Right cardiac atrium (tissue), 5 donors: ENCODE measurements at regions of chr3 and their contacts with region 1.

Region 1: DNA sequence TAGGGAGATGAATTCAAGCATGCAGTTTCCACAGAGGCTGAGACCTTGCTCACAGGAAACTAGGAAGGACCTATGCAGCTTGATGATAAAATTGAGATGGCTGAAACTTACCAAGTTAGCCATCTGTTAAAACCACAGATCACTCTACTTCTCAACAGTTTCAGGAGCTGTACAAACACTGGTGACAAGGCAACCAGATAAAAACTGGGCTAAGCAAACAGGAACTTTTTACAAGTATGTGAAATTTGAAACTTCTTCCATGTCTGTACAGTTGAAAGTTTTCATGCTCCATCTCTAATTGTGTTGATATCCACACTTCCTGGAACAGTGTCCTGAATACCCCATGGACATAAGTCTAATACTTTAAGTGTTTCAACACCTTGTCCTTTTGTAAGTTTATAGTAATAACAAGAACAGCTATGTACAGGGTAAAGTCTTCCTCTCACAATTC is 78.2 kb downstream of the FAIM start:
- DNase-seq: no peak
- ATAC-seq: no peak
- H3K4me3 ChIP-seq: no peak overlapping the region
- H3K27ac ChIP-seq: no peak overlapping the region
- H3K4me1 ChIP-seq: peaks cover 3% of the 10 kb centered on the region
- H3K27me3 ChIP-seq: no peaks in the 10 kb centered on the region

Region 2: DNA sequence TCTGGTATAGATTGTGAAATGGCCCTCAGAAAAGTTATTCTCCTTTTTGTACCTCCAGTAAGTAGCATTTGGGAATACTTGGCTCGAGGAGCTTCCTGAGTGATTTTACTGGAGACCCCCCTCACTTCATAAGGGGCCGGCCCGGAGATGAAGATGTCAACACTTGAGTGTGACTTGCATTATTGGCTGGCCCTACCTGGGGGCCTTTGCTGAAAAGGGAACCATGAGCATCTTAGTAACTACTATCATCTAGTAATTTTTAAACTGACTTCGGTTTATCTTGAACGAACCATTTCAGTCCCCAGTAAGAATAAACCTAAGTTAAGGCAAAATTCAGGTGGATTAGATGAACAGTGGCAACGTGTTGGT is 76.9 kb before region 1 on chr3:
- intact Hi-C with region 1: loop called in 1 of 4 experiments (anchors 10 kb)
- DNase-seq: no peak
- ATAC-seq: no peak
- H3K4me3 ChIP-seq: peak overlapping the region; percentile 70
- H3K27ac ChIP-seq: no peak overlapping the region
- H3K4me1 ChIP-seq: peaks cover 2% of the 10 kb centered on the region
- H3K27me3 ChIP-seq: no peaks in the 10 kb centered on the region